H1 (cell line): ENCODE measurements at regions of chr17 and their contacts with region 1.

Region 1: DNA sequence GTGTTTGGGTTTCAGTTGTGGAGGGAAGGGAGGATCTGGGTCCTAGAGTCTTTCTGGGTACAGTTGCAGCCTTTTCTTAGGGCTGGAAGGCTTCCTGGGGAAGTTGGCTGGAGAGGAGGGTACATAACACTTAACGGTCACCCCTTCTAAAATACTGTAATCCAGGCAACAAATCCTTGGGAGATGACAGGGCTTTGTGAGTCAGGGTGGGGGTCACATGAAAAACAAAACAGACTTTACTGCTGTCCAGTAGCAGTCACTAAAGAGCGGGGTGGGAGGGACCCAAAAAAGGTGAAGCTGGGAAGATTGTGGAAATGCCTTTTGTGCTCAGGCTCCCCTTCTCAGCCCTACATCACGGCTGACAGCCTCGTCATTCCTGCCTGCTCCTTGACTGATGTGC is 6.3 kb downstream of the SAP30BP start:
- DNase-seq: no peak
- H3K4me3 ChIP-seq: no peak overlapping the region
- H3K27ac ChIP-seq: no peak overlapping the region
- H3K4me1 ChIP-seq: no peaks in the 10 kb centered on the region
- H3K27me3 ChIP-seq: no peaks in the 10 kb centered on the region
- CTCF ChIP-seq: no peak
- EP300 ChIP-seq: no peak
- POLR2A ChIP-seq: peak in 1 of 2 experiments; percentile 31; a peak in 1 of 3 replicates
- RAD21 ChIP-seq: no peak

Region 2: GRCh38 chr17:75652915-75653549 is 20.5 kb before region 1 on chr17:
- CTCF ChIA-PET with region 1: interaction called, 2,200 read pairs
- POLR2A ChIA-PET with region 1: interaction called, 42 read pairs
- DNase-seq: peak in 1 of 2 experiments; percentile 77
- H3K4me3 ChIP-seq: no peak overlapping the region
- H3K27ac ChIP-seq: no peak overlapping the region
- H3K4me1 ChIP-seq: no peaks in the 10 kb centered on the region
- H3K27me3 ChIP-seq: no peaks in the 10 kb centered on the region
- CTCF ChIP-seq: peak; percentile 92 to 94 (median 93)
- EP300 ChIP-seq: no peak
- POLR2A ChIP-seq: no peak
- RAD21 ChIP-seq: peak; percentile 69 to 77

Region 3: DNA sequence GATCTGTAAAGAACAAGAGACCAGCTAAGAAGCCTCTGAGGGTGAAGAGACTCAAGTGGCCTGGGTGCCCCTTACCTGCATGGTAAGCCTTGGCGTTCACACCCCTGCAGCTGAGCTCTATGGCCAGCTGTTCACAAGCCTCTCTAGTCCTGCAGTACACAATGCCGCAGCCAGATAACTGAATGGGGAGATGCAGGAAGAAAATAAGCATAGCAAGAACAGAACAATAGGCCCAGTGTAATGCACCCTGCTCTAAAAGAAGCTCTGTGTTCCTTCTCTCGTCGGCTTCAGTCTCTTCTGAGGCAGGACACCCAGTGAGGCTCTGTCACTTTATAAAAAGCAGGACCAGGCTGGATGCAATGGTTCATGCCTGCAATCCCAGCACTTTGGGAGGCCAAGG is 12.0 kb before region 1 on chr17:
- CTCF ChIA-PET with region 1: interaction called, 52 read pairs
- POLR2A ChIA-PET with region 1: interaction called, 42 read pairs
- DNase-seq: no peak
- H3K4me3 ChIP-seq: no peak overlapping the region
- H3K27ac ChIP-seq: no peak overlapping the region
- H3K4me1 ChIP-seq: peaks cover 0 to 6% (median 2%) of the 10 kb centered on the region in 4 experiments; a peak in 2 of 7 replicates
- H3K27me3 ChIP-seq: no peaks in the 10 kb centered on the region
- CTCF ChIP-seq: no peak
- EP300 ChIP-seq: no peak
- POLR2A ChIP-seq: no peak
- RAD21 ChIP-seq: no peak

Region 4: GRCh38 chr17:75693500-75694481 is 20.3 kb after region 1 on chr17:
- CTCF ChIA-PET with region 1: interaction called, 17 read pairs
- POLR2A ChIA-PET with region 1: interaction called, 5 read pairs
- DNase-seq: no peak
- H3K4me3 ChIP-seq: peak overlapping the region in 1 of 4 experiments; percentile 19; a peak in 4 of 8 replicates
- H3K27ac ChIP-seq: peak overlapping the region; percentile 64; the same call in 1 of the 2 replicates
- H3K4me1 ChIP-seq: peaks cover 3 to 21% (median 7%) of the 10 kb centered on the region in 4 experiments
- H3K27me3 ChIP-seq: no peaks in the 10 kb centered on the region
- CTCF ChIP-seq: peak in 2 of 3 experiments; percentile 9 to 26; a peak in 2 of 4 replicates
- EP300 ChIP-seq: no peak
- POLR2A ChIP-seq: no peak
- RAD21 ChIP-seq: peak in 1 of 2 experiments; percentile 20; a peak in 1 of 4 replicates

Region 5: GRCh38 chr17:75720725-75721462 is 47.4 kb after region 1 on chr17 and contains the start of gene ITGB4:
- CTCF ChIA-PET with region 1: interaction called, 13 read pairs
- POLR2A ChIA-PET with region 1: interaction called, 4 read pairs
- DNase-seq: peak; percentile 50 to 84
- H3K4me3 ChIP-seq: peak within 1 kb of the TSS; percentile 49 to 74 (median 50)
- H3K27ac ChIP-seq: no peak within 1 kb of the TSS
- H3K4me1 ChIP-seq: peaks cover 0 to 8% (median 4%) of the 10 kb centered on the region in 4 experiments; a peak in 3 of 7 replicates
- H3K27me3 ChIP-seq: peaks cover 4 to 30% (median 17%) of the 10 kb centered on the region in 4 experiments; a peak in 6 of 7 replicates
- CTCF ChIP-seq: peak in 2 of 3 experiments; percentile 1 to 33; a peak in 2 of 4 replicates
- EP300 ChIP-seq: peak in 1 of 2 experiments; percentile 26; a peak in 1 of 3 replicates
- POLR2A ChIP-seq: peak in 1 of 2 experiments; percentile 43; a peak in 1 of 3 replicates
- RAD21 ChIP-seq: no peak
- total RNA-seq, gene ITGB4: 5.4 and 5.6 TPM in 2 replicates

Region 6: GRCh38 chr17:75814900-75815373 is 141.4 kb after region 1 on chr17:
- CTCF ChIA-PET with region 1: no interaction called
- POLR2A ChIA-PET with region 1: no interaction called
- DNase-seq: no peak
- H3K4me3 ChIP-seq: no peak overlapping the region
- H3K27ac ChIP-seq: no peak overlapping the region
- H3K4me1 ChIP-seq: no peaks in the 10 kb centered on the region
- H3K27me3 ChIP-seq: no peaks in the 10 kb centered on the region
- CTCF ChIP-seq: no peak
- EP300 ChIP-seq: no peak
- POLR2A ChIP-seq: no peak
- RAD21 ChIP-seq: no peak

Region 7: GRCh38 chr17:75854101-75854748 is 180.7 kb after region 1 on chr17:
- CTCF ChIA-PET with region 1: no interaction called
- POLR2A ChIA-PET with region 1: no interaction called
- DNase-seq: no peak
- H3K4me3 ChIP-seq: peak overlapping the region; percentile 55 to 91 (median 67)
- H3K27ac ChIP-seq: 0 out of 2 replicates have a peak overlapping the region, but pooled peaks have one; percentile 27
- H3K4me1 ChIP-seq: peaks cover 0 to 7% (median 2%) of the 10 kb centered on the region in 4 experiments; a peak in 4 of 7 replicates
- H3K27me3 ChIP-seq: no peaks in the 10 kb centered on the region
- CTCF ChIP-seq: no peak
- EP300 ChIP-seq: no peak
- POLR2A ChIP-seq: no peak
- RAD21 ChIP-seq: no peak